Astrocyte of the cerebellum (primary cell): ENCODE measurements at regions of chr17 and their contacts with region 1.

Region 1: GRCh38 chr17:29855686-29856085 is 74.3 kb downstream of the SSH2 start:
- DNase-seq: no peak
- H3K4me3 ChIP-seq: no peak overlapping the region
- CTCF ChIP-seq: no peak

Region 2: GRCh38 chr17:29483503-29483902 is 372.2 kb before region 1 on chr17:
- in situ Hi-C with region 1: no loop called
- DNase-seq: no peak
- H3K4me3 ChIP-seq: no peak overlapping the region
- CTCF ChIP-seq: no peak

Region 3: DNA sequence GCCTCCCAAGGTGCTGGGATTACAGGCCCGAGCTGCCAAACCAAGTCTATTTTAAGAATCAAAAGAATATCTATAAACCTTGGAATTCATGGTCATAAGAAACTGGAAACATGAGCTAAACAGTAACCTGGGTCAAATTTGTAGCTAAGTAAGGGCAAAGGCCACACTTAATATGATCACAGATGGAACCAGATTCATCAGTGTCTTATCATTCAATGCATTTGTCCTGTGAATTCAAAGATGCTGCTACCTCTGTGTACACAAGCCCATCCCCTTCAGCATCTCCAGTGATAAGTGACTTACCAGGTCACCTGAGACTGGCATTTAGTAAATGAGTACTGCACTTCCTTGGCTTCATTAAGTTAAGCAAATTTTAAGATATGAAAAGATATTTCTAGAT is 33.8 kb before region 1 on chr17:
- in situ Hi-C with region 1: no loop called
- DNase-seq: no peak
- H3K4me3 ChIP-seq: no peak overlapping the region
- CTCF ChIP-seq: no peak

Region 4: DNA sequence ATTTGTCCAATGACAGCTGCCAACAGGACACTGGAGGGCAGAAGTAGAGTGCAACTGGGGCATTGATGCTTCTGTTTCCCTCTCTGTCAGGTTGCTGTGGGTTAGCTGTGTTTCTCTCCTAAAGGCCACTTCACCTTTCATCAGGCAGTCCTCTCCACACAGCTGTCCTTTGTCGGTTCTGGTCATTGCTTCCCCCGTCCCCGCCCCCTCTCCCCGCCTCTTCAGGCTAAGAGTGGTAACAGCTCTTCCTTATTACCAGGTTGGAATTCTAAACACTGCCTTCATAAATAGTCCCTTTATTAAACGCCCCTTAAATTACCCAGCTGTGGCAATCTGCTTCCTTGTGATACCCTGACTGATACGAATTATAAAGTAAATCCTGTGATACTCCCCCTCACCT is 229.1 kb after region 1 on chr17:
- in situ Hi-C with region 1: loop called (anchors 10 kb)
- DNase-seq: no peak
- H3K4me3 ChIP-seq: no peak overlapping the region
- CTCF ChIP-seq: no peak